ENCODE measurements at regions of chr5 and their contacts with region 1.

Region 1: DNA sequence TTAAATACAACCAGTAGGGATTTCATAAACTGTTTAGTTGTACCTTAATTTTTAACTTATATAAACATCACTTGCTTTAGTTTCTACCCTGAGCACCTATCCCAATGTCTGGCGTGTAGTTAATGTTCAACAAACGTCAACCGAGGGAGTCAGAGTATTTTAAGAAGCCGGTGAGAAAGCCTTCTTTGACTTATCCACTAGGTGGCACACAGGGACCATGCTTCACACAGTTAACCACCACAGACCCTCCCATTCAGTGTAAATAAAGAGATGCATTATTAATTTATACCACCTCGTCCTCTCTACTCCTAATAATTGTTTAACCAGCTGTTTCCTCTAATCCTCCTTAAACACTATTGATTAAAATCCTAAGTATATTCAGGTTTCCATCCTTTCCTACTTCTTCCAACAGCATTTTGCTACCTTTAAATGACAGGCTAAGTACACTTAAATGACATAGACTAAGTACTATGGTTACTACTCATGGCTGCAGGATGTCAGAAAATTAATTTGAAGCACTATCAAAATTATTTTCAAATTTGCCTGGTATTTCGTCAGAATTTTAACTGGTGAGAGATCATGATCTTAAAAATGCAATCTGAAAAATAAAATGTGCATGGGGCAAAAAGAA is 2.3 kb downstream of the HAPLN1 start:
- DNase-seq: peak; percentile 38
- H3K4me3 ChIP-seq: no peak overlapping the region
- H3K27ac ChIP-seq: no peak overlapping the region
- H3K27me3 ChIP-seq: peaks cover 4% of the 10 kb centered on the region
- CTCF ChIP-seq: peak; percentile 91

Region 2: DNA sequence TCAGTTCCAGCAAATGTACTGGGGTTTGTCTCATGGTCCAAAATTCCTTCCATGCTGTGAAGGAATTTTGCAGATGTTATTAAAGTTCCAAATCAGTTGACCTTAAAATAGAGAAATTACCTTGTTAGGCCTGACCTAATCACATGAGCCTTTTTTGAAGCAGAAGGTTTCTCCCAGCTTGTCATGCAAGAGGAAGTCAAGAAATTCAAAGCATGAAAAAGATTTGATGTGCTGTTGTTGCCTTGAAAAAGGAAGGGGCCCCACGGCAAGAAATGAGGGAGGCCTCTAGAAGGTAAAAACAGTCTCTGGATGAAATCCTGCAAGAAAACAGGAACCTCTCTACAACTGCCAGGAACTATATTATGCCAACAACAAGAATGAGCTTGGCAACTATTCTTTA is 26.5 kb after region 1 on chr5:
- CTCF ChIA-PET with region 1: no interaction called
- POLR2A ChIA-PET with region 1: no interaction called
- DNase-seq: no peak
- H3K4me3 ChIP-seq: no peak overlapping the region
- H3K27ac ChIP-seq: no peak overlapping the region
- H3K27me3 ChIP-seq: no peaks in the 10 kb centered on the region
- CTCF ChIP-seq: no peak

Region 3: GRCh38 chr5:83900306-83900705 is 182.0 kb after region 1 on chr5:
- CTCF ChIA-PET with region 1: no interaction called
- POLR2A ChIA-PET with region 1: no interaction called
- DNase-seq: no peak
- H3K4me3 ChIP-seq: no peak overlapping the region
- H3K27ac ChIP-seq: no peak overlapping the region
- H3K27me3 ChIP-seq: no peaks in the 10 kb centered on the region
- CTCF ChIP-seq: no peak

Region 4: GRCh38 chr5:84255315-84255714 is 537.0 kb after region 1 on chr5:
- CTCF ChIA-PET with region 1: interaction called, 14 read pairs
- POLR2A ChIA-PET with region 1: no interaction called
- DNase-seq: no peak
- H3K4me3 ChIP-seq: no peak overlapping the region
- H3K27ac ChIP-seq: no peak overlapping the region
- H3K27me3 ChIP-seq: no peaks in the 10 kb centered on the region
- CTCF ChIP-seq: peak; percentile 49

Region 5: DNA sequence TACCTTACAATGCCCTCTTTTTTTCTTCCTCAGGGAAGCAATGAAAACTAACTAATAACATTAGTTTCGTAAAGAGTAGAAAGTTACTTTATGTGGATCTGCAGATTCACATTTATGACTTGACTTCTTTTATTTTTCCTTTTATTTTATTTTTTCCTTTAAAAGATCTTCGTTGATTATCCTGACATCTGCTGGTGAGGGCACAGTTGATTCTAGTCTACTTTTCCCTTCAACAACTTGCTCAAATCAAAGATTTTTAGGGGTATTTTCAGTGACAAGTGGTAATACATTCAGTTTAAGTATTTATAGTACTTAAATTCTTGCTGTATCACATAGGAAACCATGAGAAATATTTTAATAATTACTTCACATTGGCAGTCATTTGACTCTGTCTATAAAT is 661.4 kb after region 1 on chr5:
- CTCF ChIA-PET with region 1: interaction called, 19 read pairs
- POLR2A ChIA-PET with region 1: no interaction called
- DNase-seq: no peak
- H3K4me3 ChIP-seq: no peak overlapping the region
- H3K27ac ChIP-seq: no peak overlapping the region
- H3K27me3 ChIP-seq: no peaks in the 10 kb centered on the region
- CTCF ChIP-seq: peak; percentile 37

Region 6: DNA sequence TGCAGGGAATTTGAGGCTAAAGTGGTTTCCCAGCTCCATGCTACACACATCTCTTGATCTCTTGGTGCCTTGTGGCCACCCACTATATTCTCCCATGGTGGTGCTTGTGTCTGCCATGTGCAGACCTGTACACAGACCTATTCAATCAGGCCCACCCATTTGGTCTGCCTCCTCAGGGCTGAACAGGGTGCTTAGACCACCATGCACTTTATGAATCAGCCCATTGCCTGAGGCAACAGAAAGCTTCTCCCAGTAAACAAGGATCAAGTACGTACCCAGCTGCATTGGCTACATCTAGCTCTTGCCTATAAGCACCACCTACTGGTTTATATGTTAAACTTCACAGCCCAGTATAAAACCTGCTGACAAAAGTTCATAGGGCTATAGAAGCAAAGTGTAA is 1330.7 kb after region 1 on chr5:
- CTCF ChIA-PET with region 1: interaction called, 15 read pairs
- POLR2A ChIA-PET with region 1: no interaction called
- DNase-seq: peak; percentile 44
- H3K4me3 ChIP-seq: no peak overlapping the region
- H3K27ac ChIP-seq: no peak overlapping the region
- H3K27me3 ChIP-seq: no peaks in the 10 kb centered on the region
- CTCF ChIP-seq: peak; percentile 66

Measured in AG04450 (cell line).